ENCODE measurements at regions of chr19 and their contacts with region 1.

Region 1: GRCh38 chr19:51514866-51515481 is 13.4 kb upstream of the SIGLEC12 start:
- DNase-seq: peak; percentile 63
- CTCF ChIP-seq: peak; percentile 67

Region 2: DNA sequence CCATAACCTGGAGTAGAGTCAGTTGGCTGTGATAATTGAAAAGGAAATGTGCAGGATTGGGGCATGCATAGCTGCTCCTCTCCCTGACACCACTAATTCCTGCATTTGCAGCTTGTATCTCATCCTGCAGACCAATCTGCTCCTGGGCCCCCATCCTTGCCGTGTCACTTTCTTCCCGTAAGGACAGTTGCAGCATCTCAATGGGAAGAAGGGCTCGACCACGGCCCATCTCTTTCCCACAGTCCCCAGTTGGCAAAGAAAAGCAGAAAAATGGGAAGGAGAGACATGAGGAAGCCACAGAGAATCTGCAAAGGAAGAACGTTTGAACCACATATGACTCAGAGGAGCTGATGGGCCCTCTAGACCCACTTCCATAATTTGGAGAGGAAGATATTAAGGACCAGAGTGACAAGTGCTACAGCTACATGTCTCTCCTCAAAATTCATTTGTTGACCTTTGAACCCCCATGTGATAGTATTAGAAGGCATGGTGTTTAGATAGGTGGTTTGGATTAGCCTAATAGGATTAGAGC is 11.6 kb before region 1 on chr19:
- CTCF ChIA-PET with region 1: interaction called, 55 read pairs
- POLR2A ChIA-PET with region 1: no interaction called
- DNase-seq: no peak
- CTCF ChIP-seq: no peak

Region 3: DNA sequence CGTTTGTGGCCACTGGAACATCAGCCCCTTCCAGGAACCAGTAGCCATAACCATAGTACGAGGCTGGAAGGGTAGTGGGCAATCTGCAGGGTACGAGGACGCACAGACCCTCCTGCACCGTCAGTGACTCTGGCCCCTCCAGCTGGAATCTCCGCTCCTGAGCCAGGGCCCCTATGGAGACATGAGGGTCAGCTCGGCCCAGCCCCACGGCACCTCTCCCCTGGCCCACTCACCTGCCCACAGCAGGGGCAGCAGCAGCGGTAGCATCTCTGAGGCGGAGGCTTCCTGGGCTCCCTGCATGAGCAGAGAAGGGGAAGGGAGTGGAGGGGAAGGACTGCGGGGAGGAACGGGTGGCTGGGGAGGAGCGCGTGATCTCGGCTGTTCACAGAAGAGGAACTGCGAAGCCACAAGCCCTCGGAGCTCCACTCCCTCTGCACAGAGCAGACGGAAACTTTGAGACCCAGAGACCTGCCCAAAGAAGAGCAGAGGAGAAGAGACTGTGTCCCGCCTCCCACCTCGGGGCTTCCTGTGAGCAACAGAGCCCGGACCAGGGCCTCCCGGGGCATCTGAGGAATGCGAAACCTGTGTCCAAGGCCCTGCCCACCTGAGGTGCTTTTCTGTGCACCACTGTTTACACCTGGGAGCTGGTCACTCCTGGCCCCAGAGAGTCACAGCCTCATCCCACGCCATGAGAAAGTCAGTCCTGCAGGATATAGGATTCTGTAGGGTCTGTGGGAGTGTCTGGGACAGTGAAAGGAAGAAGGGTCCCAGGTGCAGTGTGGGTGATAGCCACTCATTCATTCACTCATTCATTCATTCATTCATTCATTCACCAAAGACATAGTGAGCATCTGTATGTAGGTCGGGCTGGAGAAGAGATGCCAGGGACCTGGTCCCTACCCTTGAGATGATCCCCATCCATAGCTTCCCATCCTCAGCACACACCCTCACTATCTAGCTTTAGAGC is 16.7 kb after region 1 on chr19 and contains the start of gene SIGLEC6:
- CTCF ChIA-PET with region 1: interaction called, 60 read pairs
- POLR2A ChIA-PET with region 1: no interaction called
- DNase-seq: peak; percentile 81
- CTCF ChIP-seq: no peak

Region 4: DNA sequence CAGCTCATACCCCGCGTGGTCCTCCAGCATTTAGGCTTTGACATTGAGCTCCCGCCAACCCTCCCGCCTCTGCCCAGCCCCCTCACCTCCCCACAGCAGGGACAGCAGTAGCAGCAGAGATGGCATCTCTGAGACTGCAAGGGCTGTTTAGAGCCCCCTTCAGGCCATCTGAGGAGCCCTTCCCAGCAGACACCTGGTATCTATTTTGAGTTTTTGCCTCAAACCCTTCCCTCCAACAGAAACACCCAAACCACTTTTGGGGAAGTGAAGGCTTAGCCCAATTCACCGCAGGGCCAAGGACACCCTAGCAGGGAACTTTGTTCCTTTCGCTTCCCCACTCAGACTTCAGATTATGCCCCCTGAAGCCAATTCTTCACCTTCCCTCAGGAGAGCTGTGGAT is 49.8 kb after region 1 on chr19:
- CTCF ChIA-PET with region 1: interaction called, 11 read pairs
- POLR2A ChIA-PET with region 1: no interaction called
- DNase-seq: peak; percentile 52
- CTCF ChIP-seq: peak; percentile 17

Region 5: GRCh38 chr19:51607920-51608562 is 93.1 kb after region 1 on chr19:
- CTCF ChIA-PET with region 1: interaction called, 11 read pairs
- POLR2A ChIA-PET with region 1: no interaction called
- DNase-seq: peak; percentile 54
- CTCF ChIP-seq: peak; percentile 74

Region 6: GRCh38 chr19:51615949-51616348 is 101.0 kb after region 1 on chr19:
- CTCF ChIA-PET with region 1: interaction called, 10 read pairs
- POLR2A ChIA-PET with region 1: no interaction called
- DNase-seq: no peak
- CTCF ChIP-seq: no peak

Measured in GM10248 (cell line).